ENCODE measurements at regions of chr3 and their contacts with region 1.

Region 1: DNA sequence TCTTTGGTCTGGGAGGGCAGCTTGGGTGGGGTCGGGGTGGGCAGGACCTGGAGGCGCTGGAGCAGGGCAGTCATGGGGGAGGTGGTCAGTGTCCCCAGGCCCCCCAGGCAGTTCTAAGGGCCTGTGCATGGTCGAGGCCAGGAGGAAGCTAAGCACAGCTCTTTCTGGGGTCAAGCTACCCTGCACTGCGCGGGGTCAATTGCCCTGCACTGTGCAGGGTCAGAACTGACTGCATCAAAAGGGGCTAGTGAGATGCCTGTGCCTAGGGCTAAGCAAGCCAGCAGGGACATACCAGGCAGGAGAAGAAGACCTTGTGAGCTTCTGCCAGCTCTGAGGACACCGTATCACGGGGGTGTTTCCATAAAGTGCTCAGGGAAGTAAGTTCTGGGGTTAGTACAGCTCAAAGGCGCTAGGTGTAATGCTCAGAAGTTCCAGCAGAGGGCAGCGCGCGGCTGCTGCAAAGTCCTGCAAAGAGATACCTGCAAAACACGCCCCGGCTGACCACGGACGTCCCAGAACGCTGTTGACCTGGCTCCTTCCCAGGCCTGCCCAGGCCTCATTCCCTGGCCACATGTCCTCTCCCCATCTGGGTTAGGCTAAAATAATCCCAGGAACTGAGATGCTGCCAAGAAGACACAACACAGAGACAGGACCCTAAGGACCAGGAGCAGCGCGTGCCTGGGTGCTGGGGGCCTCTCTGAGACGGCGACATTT is 18.8 kb upstream of the IQSEC1 start:
- DNase-seq: peak; percentile 71
- H3K4me3 Mint-ChIP-seq: no peak overlapping the region
- H3K27ac Mint-ChIP-seq: no peak overlapping the region
- H3K4me1 Mint-ChIP-seq: peaks cover 3% of the 10 kb centered on the region
- H3K27me3 Mint-ChIP-seq: peaks cover 5% of the 10 kb centered on the region

Region 2: GRCh38 chr3:13308380-13308801 is 216.3 kb after region 1 on chr3:
- intact Hi-C with region 1: loop called (anchors 10 kb)
- DNase-seq: no peak
- H3K4me3 Mint-ChIP-seq: no peak overlapping the region
- H3K27ac Mint-ChIP-seq: no peak overlapping the region
- H3K4me1 Mint-ChIP-seq: no peaks in the 10 kb centered on the region
- H3K27me3 Mint-ChIP-seq: no peaks in the 10 kb centered on the region

Region 3: DNA sequence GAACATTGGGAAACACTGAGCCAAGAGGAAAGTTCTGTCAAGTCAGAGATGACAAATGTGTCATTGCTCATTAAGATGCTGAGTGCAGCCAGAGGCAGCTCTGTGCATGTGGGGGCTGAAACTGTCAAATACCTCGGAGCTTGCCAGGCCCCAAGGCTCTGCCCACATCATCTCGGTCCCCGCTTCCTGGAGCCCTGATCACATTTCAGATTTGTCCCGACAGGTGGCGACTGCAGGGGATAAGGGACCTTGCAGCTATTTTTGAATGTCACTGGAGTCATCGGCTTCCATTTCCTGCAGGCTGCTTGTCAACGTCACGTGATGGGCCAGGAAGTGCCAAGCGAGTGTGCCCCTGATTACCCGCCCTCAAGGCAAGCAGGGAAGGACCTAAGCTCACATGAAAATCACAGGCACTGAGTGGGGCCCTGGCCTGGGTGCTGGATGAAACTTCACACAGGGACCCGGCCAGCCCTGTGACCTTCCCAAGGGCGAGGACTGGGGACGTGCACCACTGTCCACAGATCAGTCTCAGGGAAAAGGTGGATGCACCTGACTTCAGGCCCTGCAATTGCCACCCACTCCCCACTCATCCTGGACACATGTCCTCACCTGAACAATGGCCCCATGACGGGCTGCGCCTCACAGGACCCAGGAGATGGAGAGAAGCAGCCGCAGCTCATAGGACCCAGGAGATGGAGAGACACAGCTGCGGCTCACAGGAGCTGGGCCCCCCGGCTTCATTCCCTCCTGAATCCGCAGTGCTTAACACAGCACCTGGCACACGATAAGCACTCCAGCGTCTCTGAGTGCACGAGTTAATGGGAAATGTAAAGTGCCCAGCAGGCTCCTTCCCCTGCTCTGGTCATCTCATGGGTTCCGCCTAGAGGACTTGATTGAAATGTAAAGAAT is 254.7 kb after region 1 on chr3:
- intact Hi-C with region 1: loop called (anchors 1 kb)
- DNase-seq: peak; percentile 59
- H3K4me3 Mint-ChIP-seq: no peak overlapping the region
- H3K27ac Mint-ChIP-seq: peak overlapping the region; percentile 74
- H3K4me1 Mint-ChIP-seq: peaks cover 52% of the 10 kb centered on the region
- H3K27me3 Mint-ChIP-seq: no peaks in the 10 kb centered on the region

Region 4: GRCh38 chr3:13461169-13462158 is 369.4 kb after region 1 on chr3:
- intact Hi-C with region 1: loop called (anchors 1 kb)
- DNase-seq: peak; percentile 66
- H3K4me3 Mint-ChIP-seq: no peak overlapping the region
- H3K27ac Mint-ChIP-seq: no peak overlapping the region
- H3K4me1 Mint-ChIP-seq: no peaks in the 10 kb centered on the region
- H3K27me3 Mint-ChIP-seq: peaks cover 15% of the 10 kb centered on the region

Region 5: GRCh38 chr3:13648060-13649001 is 556.3 kb after region 1 on chr3:
- intact Hi-C with region 1: loop called (anchors 1 kb)
- DNase-seq: peak; percentile 57
- H3K4me3 Mint-ChIP-seq: no peak overlapping the region
- H3K27ac Mint-ChIP-seq: no peak overlapping the region
- H3K4me1 Mint-ChIP-seq: peaks cover 6% of the 10 kb centered on the region
- H3K27me3 Mint-ChIP-seq: peaks cover 46% of the 10 kb centered on the region

Measured in activated T-helper 1 cell treated with anti-CD3 and anti-CD28 coated beads, Interleukin-12 subunit alpha, Interleukin-12 subunit beta, Interleukin-2, Interleukin-4 antibody, amounts not matched to agents 30 ng/mL and 10 ng/mL and 1 ng/mL, durations not matched to agents 14 hours and 24 hours and 36 hours (primary cell).